Heart left ventricle (tissue), 16 donors: ENCODE measurements at regions of chr10 and their contacts with region 1.

Region 1: GRCh38 chr10:104327745-104328645 is 10.3 kb downstream of the ITPRIP start:
- DNase-seq: peak in 2 of 5 donors; percentile 76 to 86
- ATAC-seq: peak; percentile 3 to 15 (median 8)
- H3K4me3 ChIP-seq: peak overlapping the region in 10 of 12 donors; percentile 21 to 50 (median 35)
- H3K27ac ChIP-seq: peak overlapping the region; percentile 89 to 100 (median 99)
- H3K4me1 ChIP-seq: peaks cover 53 to 100% (median 100%) of the 10 kb centered on the region in 12 donors
- H3K27me3 ChIP-seq: no peaks in the 10 kb centered on the region
- CTCF ChIP-seq: no peak
- POLR2A ChIP-seq: no peak

Region 2: DNA sequence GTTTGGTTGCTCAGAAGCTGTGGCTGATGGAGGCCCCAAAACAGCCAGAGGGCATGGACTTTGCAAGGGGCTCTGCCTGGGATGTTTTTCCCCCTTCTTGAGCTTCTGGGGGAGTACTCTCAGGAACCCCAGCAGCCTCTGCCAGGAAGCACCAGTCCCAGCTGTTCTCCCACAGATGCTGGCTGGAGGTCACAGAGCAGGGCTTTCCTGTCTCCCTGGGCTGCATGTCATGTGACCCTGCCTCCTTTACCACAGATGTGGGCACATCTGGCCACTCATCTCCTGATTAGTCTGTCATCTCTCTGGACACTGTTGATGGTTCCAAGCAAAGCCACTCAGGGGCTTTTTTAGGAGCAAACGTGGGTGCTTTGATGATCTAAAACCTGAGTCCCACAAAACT is 697.8 kb before region 1 on chr10:
- intact Hi-C with region 1: no loop called
- DNase-seq: no peak
- ATAC-seq: no peak
- H3K4me3 ChIP-seq: no peak overlapping the region
- H3K27ac ChIP-seq: no peak overlapping the region
- H3K4me1 ChIP-seq: peaks cover 0 to 18% (median 2%) of the 10 kb centered on the region in 12 donors
- H3K27me3 ChIP-seq: no peaks in the 10 kb centered on the region
- CTCF ChIP-seq: no peak
- POLR2A ChIP-seq: no peak

Region 3: GRCh38 chr10:104308439-104308903 is 19.5 kb before region 1 on chr10:
- intact Hi-C with region 1: loop called in 1 of 10 experiments (anchors 2 kb)
- DNase-seq: no peak
- ATAC-seq: no peak
- H3K4me3 ChIP-seq: no peak overlapping the region
- H3K27ac ChIP-seq: peak overlapping the region in 10 of 12 donors; percentile 1 to 98 (median 90)
- H3K4me1 ChIP-seq: peaks cover 9 to 98% (median 71%) of the 10 kb centered on the region in 12 donors
- H3K27me3 ChIP-seq: no peaks in the 10 kb centered on the region
- CTCF ChIP-seq: no peak
- POLR2A ChIP-seq: no peak